ENCODE measurements at regions of chr2 and their contacts with region 1.

Region 1: GRCh38 chr2:138090330-138090729 is 126.1 kb downstream of the HNMT start:
- DNase-seq: peak; percentile 1
- H3K4me3 ChIP-seq: no peak overlapping the region
- CTCF ChIP-seq: peak; percentile 76

Region 2: GRCh38 chr2:137659612-137660011 is 430.7 kb before region 1 on chr2:
- CTCF ChIA-PET with region 1: no interaction called
- POLR2A ChIA-PET with region 1: no interaction called
- DNase-seq: no peak
- H3K4me3 ChIP-seq: no peak overlapping the region
- CTCF ChIP-seq: no peak

Region 3: GRCh38 chr2:137910641-137911040 is 179.7 kb before region 1 on chr2:
- CTCF ChIA-PET with region 1: interaction called, 62 read pairs
- POLR2A ChIA-PET with region 1: no interaction called
- DNase-seq: no peak
- H3K4me3 ChIP-seq: no peak overlapping the region
- CTCF ChIP-seq: peak; percentile 16

Region 4: DNA sequence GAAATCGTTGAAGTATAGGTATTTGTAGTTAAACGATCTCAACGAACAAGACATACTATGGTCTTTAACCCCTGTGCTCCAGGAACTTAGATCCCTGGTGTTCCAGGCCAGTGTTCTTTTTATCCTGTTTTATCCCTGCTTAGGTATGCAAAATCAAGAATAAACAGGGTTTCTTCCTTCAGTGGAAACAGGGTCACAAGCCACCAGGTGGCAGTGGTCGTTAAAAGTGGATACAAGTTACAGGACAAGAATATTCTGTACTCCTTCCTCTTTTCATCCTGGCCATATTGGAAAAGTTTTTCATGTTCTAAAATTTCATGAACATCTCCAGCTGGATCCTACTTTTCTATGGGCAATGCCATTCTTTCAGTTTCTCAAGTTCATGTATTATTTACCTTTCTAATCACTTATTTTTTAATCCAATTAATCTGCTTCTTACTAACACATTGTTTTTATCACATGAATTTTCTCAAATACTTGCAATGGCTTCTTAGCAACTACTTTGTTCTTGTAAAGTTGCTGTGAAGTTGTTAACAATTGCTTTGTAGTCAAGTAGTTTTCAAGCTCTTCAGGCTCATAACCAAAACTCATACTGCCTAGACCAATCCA is 142.5 kb before region 1 on chr2:
- CTCF ChIA-PET with region 1: interaction called, 276 read pairs
- POLR2A ChIA-PET with region 1: no interaction called
- DNase-seq: no peak
- H3K4me3 ChIP-seq: no peak overlapping the region
- CTCF ChIP-seq: peak; percentile 58

Region 5: DNA sequence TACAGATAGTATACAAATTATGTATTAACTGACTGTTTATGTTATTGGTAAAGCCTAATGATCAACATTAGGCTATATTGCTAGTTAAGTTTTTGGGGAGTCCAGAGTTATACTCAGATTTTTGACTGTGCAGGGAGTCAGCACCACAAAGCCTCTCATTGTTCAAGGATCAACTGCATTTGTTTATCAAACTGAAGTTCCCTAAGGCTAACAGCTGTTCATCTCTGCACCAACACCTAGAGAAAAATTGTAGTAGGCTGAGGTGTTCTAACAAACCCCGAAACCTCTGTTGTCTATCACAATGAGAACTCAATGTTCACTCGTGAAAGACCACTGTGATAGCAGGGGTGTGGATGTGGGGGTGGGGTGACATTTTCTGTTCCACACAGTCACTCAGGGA is 28.4 kb before region 1 on chr2:
- CTCF ChIA-PET with region 1: no interaction called
- POLR2A ChIA-PET with region 1: no interaction called
- DNase-seq: no peak
- H3K4me3 ChIP-seq: no peak overlapping the region
- CTCF ChIP-seq: no peak

Region 6: GRCh38 chr2:138078153-138078552 is 12.2 kb before region 1 on chr2:
- CTCF ChIA-PET with region 1: interaction called, 17 read pairs
- POLR2A ChIA-PET with region 1: no interaction called
- DNase-seq: no peak
- H3K4me3 ChIP-seq: no peak overlapping the region
- CTCF ChIP-seq: no peak

Region 7: GRCh38 chr2:138155304-138155703 is 65.0 kb after region 1 on chr2:
- CTCF ChIA-PET with region 1: no interaction called
- POLR2A ChIA-PET with region 1: no interaction called
- DNase-seq: no peak
- H3K4me3 ChIP-seq: no peak overlapping the region
- CTCF ChIP-seq: no peak

Region 8: DNA sequence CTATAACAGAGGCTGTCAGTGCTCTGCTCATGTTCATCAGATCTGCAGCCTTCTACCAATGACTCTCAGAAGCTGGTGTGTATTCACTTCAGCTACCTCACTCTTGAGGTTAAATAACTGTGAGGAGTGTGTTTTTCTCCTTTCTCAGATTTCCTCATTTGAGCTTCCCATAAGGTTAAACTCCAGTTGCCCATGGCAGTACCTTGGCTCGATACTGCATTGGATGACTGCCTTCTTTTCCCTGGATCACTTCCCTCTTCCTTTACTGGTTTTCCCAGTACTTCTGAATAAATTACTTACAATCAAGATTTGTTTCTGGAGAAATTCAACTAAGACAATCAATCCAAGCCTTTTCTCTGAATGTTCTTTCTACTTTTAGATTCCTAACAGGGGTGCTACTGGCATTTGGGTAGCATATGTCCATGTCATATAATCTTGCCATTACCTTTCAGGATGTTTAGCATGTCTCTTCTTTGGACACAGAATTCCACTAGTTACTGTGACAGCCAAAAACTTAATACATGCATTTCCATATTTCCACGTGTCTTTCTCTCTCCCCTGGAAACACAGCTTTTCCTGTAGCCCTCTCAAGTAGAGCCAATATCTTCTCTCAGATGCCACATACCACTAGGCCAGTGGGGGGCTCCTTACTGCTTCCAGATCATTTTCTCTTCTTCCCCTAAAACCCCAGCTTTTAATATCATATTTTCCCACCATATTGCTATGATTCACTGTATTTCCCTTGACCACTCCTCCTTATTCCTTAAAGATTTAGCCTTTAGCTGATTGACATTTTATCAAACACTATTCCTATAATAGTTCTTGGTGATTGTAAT is 396.3 kb after region 1 on chr2:
- CTCF ChIA-PET with region 1: no interaction called
- POLR2A ChIA-PET with region 1: no interaction called
- DNase-seq: no peak
- H3K4me3 ChIP-seq: no peak overlapping the region
- CTCF ChIP-seq: no peak

Region 9: DNA sequence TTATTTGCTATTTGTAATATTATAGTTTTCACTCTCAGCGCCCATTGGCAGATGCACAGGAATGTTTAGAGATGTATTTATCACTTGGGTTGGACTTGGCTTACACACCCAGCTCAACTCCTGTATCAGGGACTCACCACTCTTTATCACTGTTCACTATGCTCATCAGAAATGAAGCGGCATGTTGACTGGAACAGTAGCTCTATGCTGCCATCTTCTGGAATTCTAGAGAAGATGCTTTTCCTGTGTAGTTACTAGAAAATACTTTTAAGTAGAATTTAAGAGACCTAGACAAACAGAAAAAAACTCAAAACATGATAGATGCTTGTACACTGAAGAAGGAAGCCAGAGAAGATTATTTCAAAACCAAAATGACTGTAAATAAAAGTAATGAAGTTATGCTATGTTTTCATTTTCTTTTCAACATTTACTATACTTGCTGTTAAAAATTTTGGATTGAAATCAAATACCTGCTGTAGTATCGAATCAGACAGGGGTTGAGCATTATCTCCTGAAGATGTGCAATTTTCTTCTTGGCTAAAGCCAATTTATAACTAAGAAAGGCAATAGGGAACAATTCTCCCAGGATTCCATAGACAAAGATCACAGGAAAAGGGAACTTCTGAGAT is 737.2 kb after region 1 on chr2:
- CTCF ChIA-PET with region 1: interaction called, 11 read pairs
- POLR2A ChIA-PET with region 1: no interaction called
- DNase-seq: peak; percentile 36
- H3K4me3 ChIP-seq: no peak overlapping the region
- CTCF ChIP-seq: peak; percentile 56